ENCODE measurements at regions of chr1 and their contacts with region 1.

Region 1: DNA sequence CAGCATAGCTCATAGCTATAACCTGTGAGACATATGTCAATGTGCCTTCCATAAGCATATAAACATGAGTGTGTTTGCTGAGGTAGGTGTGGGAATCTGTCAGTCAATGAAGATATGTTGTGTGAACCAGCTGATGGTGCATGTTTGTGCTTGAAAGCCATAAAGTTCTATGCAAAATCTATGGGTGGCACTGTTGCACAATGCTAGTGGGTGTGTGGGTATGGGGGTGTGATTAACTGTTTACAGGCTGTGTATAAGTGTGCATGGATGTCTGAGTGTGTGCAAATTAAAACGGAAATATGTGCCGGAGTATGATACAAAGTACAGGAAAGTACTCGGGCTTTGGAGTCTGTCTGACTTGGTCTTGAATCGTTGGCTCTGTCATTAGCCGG is 1.0 kb upstream of the ATP2B4 start:
- DNase-seq: peak; percentile 60
- H3K4me3 ChIP-seq: no peak overlapping the region
- H3K27ac ChIP-seq: no peak overlapping the region
- H3K4me1 ChIP-seq: peaks cover 3% of the 10 kb centered on the region
- H3K27me3 ChIP-seq: no peaks in the 10 kb centered on the region
- CTCF ChIP-seq: peak in 2 of 4 experiments; percentile 44 to 50
- POLR2A ChIP-seq: no peak

Region 2: DNA sequence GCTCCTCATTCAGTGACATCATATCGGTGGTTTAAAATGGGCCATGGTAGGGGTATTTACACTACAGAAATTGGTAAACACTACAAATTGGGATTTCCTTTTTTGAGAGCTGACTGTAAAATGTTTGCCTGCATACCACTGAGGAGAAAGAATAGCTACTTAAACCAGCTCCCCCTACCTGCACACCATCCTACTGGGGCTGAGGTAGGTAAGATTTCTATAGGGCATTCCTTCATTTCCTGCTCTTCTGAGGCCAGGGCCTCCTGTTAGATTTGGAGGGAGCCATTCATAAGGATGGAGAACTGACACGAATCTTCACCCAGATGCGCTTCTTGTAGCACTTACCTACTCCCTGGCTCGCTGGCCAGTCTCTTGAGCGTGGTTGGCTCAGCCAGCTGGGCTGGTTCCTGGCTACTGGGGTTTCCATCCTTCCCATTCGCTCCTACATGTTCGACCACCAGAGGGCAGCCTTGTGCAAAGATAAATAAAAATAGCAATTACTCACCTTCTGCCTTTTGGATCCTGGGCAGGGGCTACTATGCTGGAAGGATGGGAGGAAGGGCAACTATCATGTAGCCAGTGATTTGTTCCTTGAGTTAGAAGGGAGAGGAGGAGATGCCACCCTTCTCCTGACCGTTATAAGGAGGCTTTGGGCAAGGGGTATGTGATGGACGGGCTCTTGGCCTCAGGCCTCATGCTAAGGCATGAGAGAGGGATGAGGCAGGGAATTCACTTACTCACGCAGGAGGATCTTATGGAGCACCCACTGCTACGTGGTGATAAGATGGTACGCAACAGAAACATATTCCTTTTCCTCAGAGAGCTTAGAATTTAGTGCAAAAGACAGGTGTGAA is 121.0 kb before region 1 on chr1:
- intact Hi-C with region 1: loop called (anchors 5 kb)
- DNase-seq: peak; percentile 83
- H3K4me3 ChIP-seq: no peak overlapping the region
- H3K27ac ChIP-seq: no peak overlapping the region
- H3K4me1 ChIP-seq: no peaks in the 10 kb centered on the region
- H3K27me3 ChIP-seq: no peaks in the 10 kb centered on the region
- CTCF ChIP-seq: peak; percentile 36 to 94 (median 88)
- POLR2A ChIP-seq: no peak

Region 3: DNA sequence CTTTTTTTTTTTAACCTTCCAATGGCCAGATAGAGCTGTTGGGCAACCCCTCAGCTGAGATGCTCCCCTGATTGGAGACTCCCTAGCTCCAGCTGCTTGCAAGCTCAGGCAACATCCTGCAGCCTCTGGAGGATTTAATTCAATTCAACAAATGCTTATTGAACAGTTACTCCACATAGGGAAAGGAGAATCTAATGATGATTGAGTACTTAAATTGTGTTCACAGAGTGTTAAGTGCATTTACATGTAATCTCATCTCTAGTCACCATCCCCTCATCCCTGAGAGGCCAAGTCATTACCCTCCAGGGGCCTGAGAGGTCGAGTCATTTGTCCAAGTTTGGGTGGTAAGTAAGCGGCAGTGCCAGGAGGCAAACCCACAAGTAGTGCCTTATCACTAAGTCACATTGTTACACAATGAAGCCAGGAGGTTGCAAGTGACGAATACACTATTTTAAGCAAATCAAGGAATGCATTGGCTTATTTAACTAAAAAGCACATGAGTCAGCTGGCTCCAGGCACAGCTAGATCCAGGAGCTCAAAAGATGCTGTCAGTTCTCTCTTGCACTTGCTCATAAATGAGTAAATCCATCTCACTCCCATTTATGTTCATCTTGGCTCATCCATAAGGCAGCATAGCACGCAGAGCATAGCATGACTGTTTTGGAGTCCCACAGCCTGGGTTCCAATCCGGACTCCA is 67.4 kb before region 1 on chr1:
- intact Hi-C with region 1: loop called (anchors 2 kb)
- DNase-seq: no peak
- H3K4me3 ChIP-seq: no peak overlapping the region
- H3K27ac ChIP-seq: peak overlapping the region; percentile 65 to 73
- H3K4me1 ChIP-seq: no peaks in the 10 kb centered on the region
- H3K27me3 ChIP-seq: no peaks in the 10 kb centered on the region
- CTCF ChIP-seq: no peak
- POLR2A ChIP-seq: no peak

Region 4: DNA sequence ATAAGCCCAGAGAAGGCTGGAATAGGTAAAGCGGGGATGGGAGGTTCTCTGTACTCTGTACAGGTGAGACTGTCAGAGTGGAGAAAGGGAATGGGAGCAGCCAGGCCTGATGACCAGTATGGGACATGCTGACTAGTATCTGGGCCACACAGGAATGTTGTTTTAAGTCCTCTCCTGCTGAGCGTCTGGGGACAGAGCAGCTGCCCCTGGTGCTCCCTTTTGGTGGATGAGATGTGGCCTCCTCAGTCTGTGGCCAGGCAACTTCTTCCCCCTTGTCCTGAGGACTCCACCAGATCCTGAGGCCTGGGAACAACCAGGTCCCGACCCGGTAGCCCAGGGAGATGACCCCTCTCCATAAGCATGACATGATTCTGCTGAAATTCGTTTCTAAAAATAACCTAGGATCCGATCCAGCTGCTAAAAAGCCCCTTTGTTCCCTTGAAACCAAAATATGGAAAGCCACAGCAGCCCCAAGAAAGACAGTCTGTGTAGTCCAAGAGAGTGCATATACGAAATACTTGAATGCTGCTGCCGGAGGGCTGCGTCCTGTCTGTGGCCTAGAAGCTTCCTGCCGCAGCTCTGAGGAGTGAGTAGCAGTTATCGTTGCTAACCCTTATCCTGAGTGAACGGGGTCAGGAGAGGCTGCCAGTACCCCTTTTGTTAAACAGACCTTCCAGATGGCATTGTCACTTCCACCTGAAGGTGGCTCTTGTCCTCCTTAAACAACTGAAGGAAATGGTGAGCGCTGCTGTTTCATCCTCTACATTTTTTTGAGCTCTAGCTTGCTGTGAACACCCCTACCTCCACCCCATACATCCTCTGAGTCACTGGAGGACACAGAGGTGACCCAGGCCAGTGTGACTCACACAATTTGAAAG is 48.2 kb after region 1 on chr1:
- intact Hi-C with region 1: loop called (anchors 5 kb)
- DNase-seq: no peak
- H3K4me3 ChIP-seq: no peak overlapping the region
- H3K27ac ChIP-seq: peak overlapping the region; percentile 41 to 55
- H3K4me1 ChIP-seq: peaks cover 4% of the 10 kb centered on the region
- H3K27me3 ChIP-seq: no peaks in the 10 kb centered on the region
- CTCF ChIP-seq: peak in 1 of 4 experiments; percentile 30
- POLR2A ChIP-seq: no peak

Region 5: GRCh38 chr1:203692565-203693470 is 67.2 kb after region 1 on chr1:
- intact Hi-C with region 1: loop called (anchors 2 kb)
- DNase-seq: peak; percentile 8
- H3K4me3 ChIP-seq: no peak overlapping the region
- H3K27ac ChIP-seq: peak overlapping the region; percentile 39 to 55
- H3K4me1 ChIP-seq: no peaks in the 10 kb centered on the region
- H3K27me3 ChIP-seq: no peaks in the 10 kb centered on the region
- CTCF ChIP-seq: peak in 1 of 4 experiments; percentile 12
- POLR2A ChIP-seq: no peak

Measured in prostate gland (tissue), 2 donors.